H1 (cell line): ENCODE measurements at regions of chr1 and their contacts with region 1.

Region 1: GRCh38 chr1:5620990-5621389 is 371.2 kb downstream of the NPHP4 start:
- DNase-seq: peak in 1 of 2 experiments; percentile 50
- H3K4me3 ChIP-seq: no peak overlapping the region
- H3K27ac ChIP-seq: no peak overlapping the region
- H3K4me1 ChIP-seq: peaks cover 0 to 3% (median 0%) of the 10 kb centered on the region in 4 experiments; a peak in 2 of 7 replicates
- H3K27me3 ChIP-seq: no peaks in the 10 kb centered on the region
- CTCF ChIP-seq: peak; percentile 70 to 87 (median 86)
- EP300 ChIP-seq: no peak
- POLR2A ChIP-seq: no peak
- RAD21 ChIP-seq: peak; percentile 78 to 83

Region 2: DNA sequence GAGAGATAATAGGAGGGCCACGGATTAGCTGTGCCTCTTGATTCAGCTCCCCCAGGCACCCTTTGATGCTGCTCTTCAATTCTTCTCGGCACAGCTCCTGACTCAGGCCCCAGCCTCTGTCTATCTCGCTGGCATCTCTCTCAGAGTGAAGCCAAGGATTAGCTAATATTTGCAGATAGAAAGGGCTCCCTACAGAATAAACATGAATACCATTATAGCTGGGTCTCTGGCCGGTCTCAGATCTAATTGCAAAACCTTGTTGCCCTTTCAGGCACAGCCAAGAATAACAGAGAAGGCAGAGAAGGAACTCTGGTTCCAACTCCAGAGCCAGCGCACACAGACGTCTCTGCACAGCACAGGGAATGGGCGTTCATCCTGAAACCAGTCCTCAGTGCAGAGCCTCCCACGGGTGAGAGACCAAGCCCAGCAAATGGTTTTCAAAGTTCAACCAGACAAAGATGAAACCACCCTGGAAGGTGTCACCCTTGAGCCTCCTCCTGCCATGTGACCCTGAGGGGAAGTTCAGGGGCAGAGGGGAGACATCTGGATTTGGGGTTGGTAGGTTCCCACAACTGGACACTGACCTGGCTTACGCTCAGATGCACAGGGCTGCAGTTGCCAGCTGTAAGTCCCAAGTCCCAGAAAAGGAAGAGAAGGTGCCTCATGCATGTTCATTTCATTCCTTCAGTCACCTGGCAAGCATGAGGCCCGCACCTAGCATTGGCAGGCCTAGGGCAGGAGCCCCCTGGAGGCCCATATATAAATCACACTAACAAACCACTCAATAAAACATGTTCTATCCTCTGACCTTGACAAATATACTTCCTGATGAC is 22.8 kb before region 1 on chr1:
- CTCF ChIA-PET with region 1: interaction called, 22 read pairs
- POLR2A ChIA-PET with region 1: no interaction called
- DNase-seq: no peak
- H3K4me3 ChIP-seq: no peak overlapping the region
- H3K27ac ChIP-seq: no peak overlapping the region
- H3K4me1 ChIP-seq: peaks cover 0 to 3% (median 0%) of the 10 kb centered on the region in 4 experiments; a peak in 2 of 7 replicates
- H3K27me3 ChIP-seq: no peaks in the 10 kb centered on the region
- CTCF ChIP-seq: peak; percentile 32 to 44 (median 36)
- EP300 ChIP-seq: no peak
- POLR2A ChIP-seq: no peak
- RAD21 ChIP-seq: peak in 1 of 2 experiments; percentile 46; a peak in 3 of 4 replicates

Region 3: DNA sequence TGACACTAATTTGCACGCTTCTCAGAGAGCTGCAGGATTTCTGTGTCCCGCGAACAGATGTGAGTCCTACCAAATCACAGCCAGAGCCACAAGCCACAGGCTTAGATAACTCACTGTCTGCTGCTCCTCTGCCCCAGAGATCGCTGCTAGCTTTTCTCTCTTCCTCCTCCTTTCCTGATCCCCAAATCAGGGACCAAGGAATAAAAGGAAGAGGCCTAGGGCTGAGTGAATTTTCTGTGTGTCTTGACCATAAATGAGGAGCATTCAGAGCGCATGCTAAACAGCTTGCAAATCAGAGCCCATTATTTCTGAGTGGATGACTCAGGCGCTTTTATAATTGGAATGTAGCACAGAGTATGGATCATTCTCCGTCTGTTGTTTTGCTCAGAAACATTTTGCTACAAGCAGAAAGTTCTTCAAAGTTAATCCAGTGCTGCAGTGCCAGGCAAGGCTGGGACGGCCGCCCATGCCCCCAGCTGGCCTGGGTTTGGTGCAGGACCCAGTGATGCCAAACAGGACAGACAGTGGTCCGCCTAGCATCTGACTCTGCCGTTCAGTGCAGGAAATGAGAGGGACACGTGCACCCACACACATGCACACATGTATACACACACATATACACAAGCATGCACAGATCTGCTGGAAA is 462.9 kb after region 1 on chr1:
- CTCF ChIA-PET with region 1: no interaction called
- POLR2A ChIA-PET with region 1: no interaction called
- DNase-seq: no peak
- H3K4me3 ChIP-seq: no peak overlapping the region
- H3K27ac ChIP-seq: no peak overlapping the region
- H3K4me1 ChIP-seq: peaks cover 0 to 5% (median 2%) of the 10 kb centered on the region in 4 experiments; a peak in 3 of 7 replicates
- H3K27me3 ChIP-seq: 0 out of 7 replicates have a peak, but pooled peaks cover 0 to 2% (median 0%) of the 10 kb centered on the region in 4 experiments
- CTCF ChIP-seq: no peak
- EP300 ChIP-seq: no peak
- POLR2A ChIP-seq: no peak
- RAD21 ChIP-seq: no peak